Natural killer cell (primary cell): ENCODE measurements at regions of chr1 and their contacts with region 1.

Region 1: GRCh38 chr1:203273206-203273868 is 32.0 kb upstream of the BTG2 start:
- DNase-seq: peak; percentile 88 to 95
- ATAC-seq: peak; percentile 82 to 90 (median 84)
- H3K4me3 ChIP-seq: peak overlapping the region; percentile 32
- H3K4me3 Mint-ChIP-seq: peak overlapping the region; percentile 52
- H3K27ac ChIP-seq: peak overlapping the region; percentile 39
- H3K27ac Mint-ChIP-seq: peak overlapping the region; percentile 60 to 80
- H3K4me1 ChIP-seq: peaks cover 50% of the 10 kb centered on the region
- H3K4me1 Mint-ChIP-seq: peaks cover 7 to 23% of the 10 kb centered on the region in 2 donors
- H3K27me3 ChIP-seq: no peaks in the 10 kb centered on the region
- H3K27me3 Mint-ChIP-seq: no peaks in the 10 kb centered on the region
- CTCF ChIP-seq: peak; percentile 96

Region 2: GRCh38 chr1:203216274-203217138 is 56.8 kb before region 1 on chr1:
- intact Hi-C with region 1: no loop called
- DNase-seq: peak; percentile 25 to 80
- ATAC-seq: peak; percentile 34 to 80 (median 50)
- H3K4me3 ChIP-seq: no peak overlapping the region
- H3K4me3 Mint-ChIP-seq: no peak overlapping the region
- H3K27ac ChIP-seq: no peak overlapping the region
- H3K27ac Mint-ChIP-seq: no peak overlapping the region
- H3K4me1 ChIP-seq: peaks cover 8% of the 10 kb centered on the region
- H3K4me1 Mint-ChIP-seq: peaks cover 0 to 8% of the 10 kb centered on the region in 2 donors
- H3K27me3 ChIP-seq: no peaks in the 10 kb centered on the region
- H3K27me3 Mint-ChIP-seq: peaks cover 20% of the 10 kb centered on the region in 2 donors
- CTCF ChIP-seq: peak; percentile 76

Region 3: GRCh38 chr1:203304919-203305808 is 31.8 kb after region 1 on chr1 and contains the start of gene BTG2:
- intact Hi-C with region 1: loop called (anchors 1 kb)
- DNase-seq: peak; percentile 95 to 97
- ATAC-seq: peak; percentile 77 to 92 (median 82)
- H3K4me3 ChIP-seq: peak within 1 kb of the TSS; percentile 99
- H3K4me3 Mint-ChIP-seq: peak within 1 kb of the TSS; percentile 89
- H3K27ac ChIP-seq: peak within 1 kb of the TSS; percentile 97
- H3K27ac Mint-ChIP-seq: peak within 1 kb of the TSS; percentile 98 to 99
- H3K4me1 ChIP-seq: peaks cover 78% of the 10 kb centered on the region
- H3K4me1 Mint-ChIP-seq: peaks cover 75 to 77% of the 10 kb centered on the region in 2 donors
- H3K27me3 ChIP-seq: no peaks in the 10 kb centered on the region
- H3K27me3 Mint-ChIP-seq: no peaks in the 10 kb centered on the region
- CTCF ChIP-seq: no peak
- total RNA-seq, gene BTG2: 499 to 1,024 (median 851) TPM